PC-9 (cell line): ENCODE measurements at regions of chr2 and their contacts with region 1.

Region 1: GRCh38 chr2:187078297-187078696 is 229.3 kb upstream of the ZSWIM2 start:
- DNase-seq: no peak
- H3K4me3 ChIP-seq: no peak overlapping the region
- H3K27ac ChIP-seq: no peak overlapping the region
- H3K4me1 ChIP-seq: no peaks in the 10 kb centered on the region
- H3K27me3 ChIP-seq: no peaks in the 10 kb centered on the region
- CTCF ChIP-seq: no peak

Region 2: DNA sequence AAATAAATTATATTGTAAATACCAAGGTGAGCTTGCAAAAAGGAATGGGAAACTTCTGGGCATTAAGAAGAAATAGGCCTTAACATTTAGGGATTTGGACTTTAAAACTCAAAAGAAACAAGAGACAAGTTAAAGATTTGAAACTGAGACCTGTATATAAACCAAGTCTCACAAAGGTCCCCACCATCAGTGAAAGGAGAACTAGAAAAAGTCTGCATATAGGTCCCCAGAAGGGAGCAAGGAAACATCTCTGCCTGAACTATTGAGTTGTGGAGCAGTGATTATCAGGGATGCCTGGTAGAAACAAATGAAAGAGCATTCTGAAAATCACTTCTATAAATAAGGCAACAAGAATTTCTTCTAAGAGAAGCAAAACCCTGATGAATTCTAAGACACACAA is 518.9 kb before region 1 on chr2:
- CTCF ChIA-PET with region 1: no interaction called
- POLR2A ChIA-PET with region 1: no interaction called
- intact Hi-C with region 1: no loop called
- DNase-seq: no peak
- H3K4me3 ChIP-seq: no peak overlapping the region
- H3K27ac ChIP-seq: no peak overlapping the region
- H3K4me1 ChIP-seq: peaks cover 7% of the 10 kb centered on the region; the same call in 1 of the 2 replicates
- H3K27me3 ChIP-seq: no peaks in the 10 kb centered on the region
- CTCF ChIP-seq: no peak

Region 3: DNA sequence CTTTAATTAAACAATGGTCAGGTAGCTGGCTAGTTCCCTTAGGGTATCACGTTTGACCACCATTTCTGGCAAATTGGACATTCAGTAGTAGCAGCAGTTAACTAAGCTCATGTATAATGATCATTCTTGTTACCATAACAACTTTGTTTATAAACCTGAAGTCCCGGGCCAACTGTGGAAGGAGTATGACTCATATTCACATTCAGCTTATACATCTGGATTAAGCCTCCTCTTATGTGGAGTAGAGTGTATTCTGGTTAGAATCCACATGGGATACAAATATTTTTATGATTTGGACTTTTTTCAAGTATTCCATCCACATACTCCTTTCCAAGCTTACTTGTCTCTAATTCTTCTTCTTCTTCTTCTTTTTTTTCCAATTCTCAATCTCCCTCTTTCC is 159.0 kb before region 1 on chr2:
- CTCF ChIA-PET with region 1: no interaction called
- POLR2A ChIA-PET with region 1: no interaction called
- intact Hi-C with region 1: no loop called
- DNase-seq: no peak
- H3K4me3 ChIP-seq: no peak overlapping the region
- H3K27ac ChIP-seq: no peak overlapping the region
- H3K4me1 ChIP-seq: no peaks in the 10 kb centered on the region
- H3K27me3 ChIP-seq: no peaks in the 10 kb centered on the region
- CTCF ChIP-seq: no peak

Region 4: DNA sequence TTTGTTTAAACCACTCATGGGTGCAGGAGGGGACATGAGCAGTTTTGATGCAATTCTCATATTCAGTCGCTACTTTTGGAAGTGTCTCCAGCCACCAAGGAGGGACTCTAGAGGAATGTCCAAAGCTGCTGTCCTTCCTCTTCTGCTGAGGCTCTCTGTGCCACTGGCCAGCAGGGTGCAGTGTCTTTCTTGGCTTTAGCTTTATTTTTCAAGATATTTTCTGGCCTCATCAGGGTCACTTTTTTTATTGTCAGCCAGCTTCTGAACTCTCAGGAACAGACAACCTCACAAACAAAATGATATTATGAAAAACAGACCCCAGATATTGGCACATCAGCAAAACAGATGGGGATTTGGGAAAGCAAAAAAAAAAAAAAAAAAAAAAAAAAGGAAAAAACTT is 60.0 kb after region 1 on chr2:
- CTCF ChIA-PET with region 1: no interaction called
- POLR2A ChIA-PET with region 1: no interaction called
- intact Hi-C with region 1: no loop called
- DNase-seq: peak in 1 of 2 experiments; percentile 2
- H3K4me3 ChIP-seq: no peak overlapping the region
- H3K27ac ChIP-seq: no peak overlapping the region
- H3K4me1 ChIP-seq: no peaks in the 10 kb centered on the region
- H3K27me3 ChIP-seq: no peaks in the 10 kb centered on the region
- CTCF ChIP-seq: peak; percentile 51; the same call in 1 of the 2 replicates

Region 5: DNA sequence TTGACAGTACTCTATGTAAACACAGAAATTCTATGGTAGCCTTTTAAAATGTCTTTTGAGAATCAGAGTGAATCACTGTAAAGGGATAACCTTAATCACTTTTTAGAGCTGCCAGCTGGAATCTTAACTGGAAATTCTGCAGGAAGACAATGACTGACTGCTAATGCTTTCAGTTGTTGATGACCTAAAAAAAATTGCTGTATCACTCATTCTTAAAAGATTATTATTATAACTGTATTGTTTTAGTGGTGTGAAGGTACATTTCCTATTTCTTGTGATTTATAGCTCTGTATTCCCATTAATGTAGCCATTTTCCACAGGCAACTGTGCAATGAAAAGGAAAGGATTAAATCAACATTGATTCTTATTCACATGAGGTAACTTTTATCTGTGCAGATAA is 109.2 kb after region 1 on chr2:
- CTCF ChIA-PET with region 1: no interaction called
- POLR2A ChIA-PET with region 1: interaction called, 10 read pairs
- intact Hi-C with region 1: no loop called
- DNase-seq: no peak
- H3K4me3 ChIP-seq: no peak overlapping the region
- H3K27ac ChIP-seq: no peak overlapping the region
- H3K4me1 ChIP-seq: no peaks in the 10 kb centered on the region
- H3K27me3 ChIP-seq: no peaks in the 10 kb centered on the region
- CTCF ChIP-seq: no peak